ENCODE measurements at regions of chr19 and their contacts with region 1.

Region 1: DNA sequence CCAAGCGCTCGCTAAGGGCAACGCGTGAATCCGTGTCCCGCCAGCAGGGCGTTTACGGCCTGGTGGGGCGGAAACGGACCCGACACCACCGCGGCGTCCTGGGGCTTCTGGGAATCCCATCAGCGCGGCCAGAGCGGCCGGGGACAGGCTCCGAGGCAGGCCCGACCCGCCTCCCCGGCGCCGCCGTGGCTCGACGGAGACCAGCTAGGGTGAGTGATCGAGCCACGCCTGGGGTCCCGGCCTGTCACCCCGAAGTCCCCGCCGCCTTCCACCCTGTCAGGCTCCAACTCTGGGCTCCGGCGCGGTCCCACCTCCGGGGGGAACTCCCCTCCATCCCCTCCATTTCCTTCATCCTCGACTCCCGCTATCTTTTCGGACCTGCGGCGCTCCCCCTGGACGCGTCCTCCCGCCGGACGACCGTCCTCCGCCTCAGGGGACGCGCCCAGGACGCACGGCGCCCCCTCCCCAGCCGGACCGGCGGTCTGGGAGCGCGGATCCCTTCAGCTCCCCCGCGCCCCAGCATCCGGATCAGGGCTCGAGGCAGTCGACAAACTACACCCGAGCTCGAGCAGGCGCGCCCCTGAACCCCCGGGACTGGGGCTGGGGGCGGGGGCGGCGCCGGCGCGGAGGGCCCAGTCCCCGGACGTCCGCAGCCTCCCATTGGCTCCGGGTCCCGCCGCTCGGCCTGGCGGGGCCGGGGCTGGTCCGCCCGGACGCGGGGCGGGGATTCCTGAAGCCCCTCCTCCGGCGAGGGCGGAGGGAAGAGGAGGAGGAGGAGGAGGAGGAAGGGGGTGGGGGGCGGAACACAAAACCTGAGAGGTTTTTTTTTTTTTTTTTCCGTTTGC is 638 bp upstream of the BICRA start:
- DNase-seq: peak; percentile 96
- H3K4me3 Mint-ChIP-seq: peak overlapping the region; percentile 81
- H3K27ac Mint-ChIP-seq: peak overlapping the region; percentile 72
- H3K4me1 Mint-ChIP-seq: peaks cover 21% of the 10 kb centered on the region
- H3K27me3 Mint-ChIP-seq: no peaks in the 10 kb centered on the region

Region 2: GRCh38 chr19:47514869-47515588 is 93.3 kb before region 1 on chr19 and contains the start of gene NAPA:
- CTCF ChIA-PET with region 1: interaction called, 7 read pairs
- intact Hi-C with region 1: loop called (anchors 1 kb)
- DNase-seq: peak; percentile 100
- H3K4me3 Mint-ChIP-seq: peak within 1 kb of the TSS; percentile 98
- H3K27ac Mint-ChIP-seq: peak within 1 kb of the TSS; percentile 97
- H3K4me1 Mint-ChIP-seq: peaks cover 81% of the 10 kb centered on the region
- H3K27me3 Mint-ChIP-seq: no peaks in the 10 kb centered on the region
- total RNA-seq, gene NAPA: 72.5 to 75.1 TPM